Heart left ventricle (tissue), 16 donors: ENCODE measurements at regions of chr14 and their contacts with region 1.

Region 1: GRCh38 chr14:64885559-64885958 is 5.9 kb upstream of the SPTB start:
- DNase-seq: no peak
- ATAC-seq: no peak
- H3K4me3 ChIP-seq: no peak overlapping the region
- H3K27ac ChIP-seq: no peak overlapping the region
- H3K4me1 ChIP-seq: peaks cover 0 to 7% (median 3%) of the 10 kb centered on the region in 12 donors
- H3K27me3 ChIP-seq: peaks cover 0 to 28% (median 4%) of the 10 kb centered on the region in 9 donors
- CTCF ChIP-seq: no peak
- POLR2A ChIP-seq: no peak

Region 2: GRCh38 chr14:64569184-64569631 is 316.4 kb before region 1 on chr14:
- intact Hi-C with region 1: no loop called
- DNase-seq: peak in 4 of 5 donors; percentile 51 to 84 (median 62)
- ATAC-seq: peak; percentile 91 to 97 (median 96)
- H3K4me3 ChIP-seq: no peak overlapping the region
- H3K27ac ChIP-seq: peak overlapping the region; percentile 26 to 78 (median 65)
- H3K4me1 ChIP-seq: peaks cover 0 to 40% (median 18%) of the 10 kb centered on the region in 12 donors
- H3K27me3 ChIP-seq: no peaks in the 10 kb centered on the region
- CTCF ChIP-seq: no peak
- POLR2A ChIP-seq: no peak

Region 3: DNA sequence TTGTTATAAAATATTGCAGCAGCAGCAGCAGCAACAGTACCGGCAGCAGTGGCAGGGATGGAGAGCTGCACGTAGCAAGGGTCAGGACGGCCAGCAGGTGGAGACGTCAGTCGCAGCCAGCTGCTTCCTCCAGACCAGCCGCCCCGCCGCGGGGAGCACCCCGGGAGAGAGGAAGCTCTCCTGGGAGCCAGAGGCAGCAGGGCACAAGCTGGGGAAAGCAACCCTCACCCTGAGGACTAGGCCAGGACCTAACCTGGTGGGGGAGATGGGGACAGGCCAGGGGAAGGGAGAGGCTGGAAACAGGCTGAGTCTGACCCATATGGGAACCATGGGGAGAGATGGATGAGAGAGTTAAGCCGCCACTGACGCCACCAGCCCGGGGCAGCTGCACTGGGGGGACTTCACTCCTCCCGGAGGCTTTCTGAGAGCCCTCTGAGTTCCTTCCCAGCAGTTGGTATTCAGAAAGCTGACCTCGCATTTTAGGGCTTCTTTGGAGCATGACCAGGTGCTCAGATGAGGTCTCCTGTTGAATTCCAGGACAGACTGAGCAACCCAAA is 62.2 kb before region 1 on chr14:
- intact Hi-C with region 1: loop called in 8 of 10 experiments (anchors 2 to 5 kb)
- DNase-seq: peak; percentile 74 to 89 (median 86)
- ATAC-seq: peak; percentile 74 to 89 (median 86)
- H3K4me3 ChIP-seq: no peak overlapping the region
- H3K27ac ChIP-seq: peak overlapping the region in 2 of 12 donors; percentile 4 to 17
- H3K4me1 ChIP-seq: peaks cover 0 to 51% (median 20%) of the 10 kb centered on the region in 12 donors
- H3K27me3 ChIP-seq: no peaks in the 10 kb centered on the region
- CTCF ChIP-seq: peak; percentile 62 to 84 (median 76)
- POLR2A ChIP-seq: no peak